H1 (cell line): ENCODE measurements at regions of chr1 and their contacts with region 1.

Region 1: DNA sequence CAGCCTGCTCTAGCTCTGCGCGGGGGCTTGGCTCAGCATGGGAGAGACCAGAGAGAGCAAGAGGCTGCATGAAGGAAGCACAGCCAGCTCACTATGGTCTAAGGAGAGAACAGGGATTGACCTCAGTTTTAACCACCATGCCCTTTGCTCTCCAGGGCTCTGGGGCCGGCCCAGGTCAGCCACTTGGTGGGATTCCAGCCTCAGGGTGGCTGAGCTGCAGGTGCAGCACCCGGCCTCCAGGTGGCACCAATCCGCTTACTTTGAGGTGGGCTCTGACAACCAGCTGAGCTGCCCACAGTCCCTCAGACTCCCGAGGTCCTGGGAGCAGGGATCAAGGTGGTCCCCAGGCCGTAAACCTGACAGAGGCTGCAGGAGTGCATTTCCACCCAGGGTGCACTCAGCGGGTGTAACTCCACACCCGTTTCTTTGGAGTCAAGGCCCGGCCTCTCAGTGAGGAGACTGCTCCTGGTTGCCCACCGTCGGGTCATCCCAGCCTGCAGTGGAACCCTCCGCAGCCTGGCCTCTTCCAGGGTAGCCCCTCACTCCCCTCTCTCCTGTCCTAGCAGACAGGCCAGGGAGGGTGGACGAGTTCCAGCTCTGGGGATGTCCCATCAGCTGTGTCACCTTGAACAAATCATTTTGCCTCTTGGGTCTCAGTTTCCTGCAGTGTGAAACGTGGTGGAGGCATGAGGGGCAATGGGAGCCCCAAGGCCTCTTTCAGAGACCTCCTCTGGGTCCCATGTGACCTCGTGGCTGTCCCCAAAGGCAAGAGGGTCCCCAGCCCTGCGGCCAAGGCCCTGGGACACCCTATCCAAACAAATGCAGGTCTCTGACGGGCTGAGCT is 607 bp upstream of the LGR6 start:
- DNase-seq: peak in 1 of 2 experiments; percentile 92
- H3K4me3 ChIP-seq: peak overlapping the region in 3 of 4 experiments; percentile 34 to 65 (median 40); a peak in 5 of 8 replicates
- H3K27ac ChIP-seq: no peak overlapping the region
- H3K4me1 ChIP-seq: peaks cover 0 to 9% (median 2%) of the 10 kb centered on the region in 4 experiments; a peak in 5 of 7 replicates
- H3K27me3 ChIP-seq: peaks cover 16 to 31% (median 22%) of the 10 kb centered on the region in 4 experiments
- CTCF ChIP-seq: peak; percentile 93 to 97 (median 96)
- EP300 ChIP-seq: no peak
- POLR2A ChIP-seq: no peak
- RAD21 ChIP-seq: peak; percentile 81 to 86

Region 2: GRCh38 chr1:202154766-202155477 is 38.1 kb before region 1 on chr1:
- CTCF ChIA-PET with region 1: interaction called, 22 read pairs
- POLR2A ChIA-PET with region 1: no interaction called
- DNase-seq: peak; percentile 39 to 77
- H3K4me3 ChIP-seq: no peak overlapping the region
- H3K27ac ChIP-seq: no peak overlapping the region
- H3K4me1 ChIP-seq: peaks cover 0 to 9% (median 5%) of the 10 kb centered on the region in 4 experiments; a peak in 3 of 7 replicates
- H3K27me3 ChIP-seq: no peaks in the 10 kb centered on the region
- CTCF ChIP-seq: peak; percentile 67 to 84 (median 69)
- EP300 ChIP-seq: no peak
- POLR2A ChIP-seq: no peak
- RAD21 ChIP-seq: peak; percentile 57 to 65

Region 3: DNA sequence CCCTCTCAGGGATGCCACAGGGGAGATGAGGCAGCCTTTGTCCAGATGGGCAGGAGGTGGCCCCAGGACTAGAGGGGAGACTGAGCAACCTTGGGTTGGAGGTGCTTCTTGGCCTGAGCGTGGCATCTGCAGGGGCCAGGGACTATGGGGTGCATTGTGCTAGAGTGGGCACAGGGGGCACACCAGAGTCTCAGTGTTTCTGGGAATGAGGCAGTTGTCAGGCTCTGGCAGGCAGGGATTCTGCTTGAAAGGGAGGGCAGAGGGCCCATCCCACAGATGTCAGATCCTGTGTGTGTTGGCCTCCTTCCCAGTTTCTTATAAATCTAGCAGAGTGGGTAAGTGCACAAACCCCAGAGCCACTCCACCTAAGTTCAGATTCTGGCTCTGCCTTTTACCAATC is 14.3 kb after region 1 on chr1:
- CTCF ChIA-PET with region 1: interaction called, 48 read pairs
- POLR2A ChIA-PET with region 1: interaction called, 3 read pairs
- DNase-seq: no peak
- H3K4me3 ChIP-seq: no peak overlapping the region
- H3K27ac ChIP-seq: no peak overlapping the region
- H3K4me1 ChIP-seq: peaks cover 0 to 2% (median 0%) of the 10 kb centered on the region in 4 experiments; a peak in 1 of 7 replicates
- H3K27me3 ChIP-seq: peaks cover 0 to 2% (median 0%) of the 10 kb centered on the region in 4 experiments; a peak in 1 of 7 replicates
- CTCF ChIP-seq: peak; percentile 48 to 59 (median 51)
- EP300 ChIP-seq: no peak
- POLR2A ChIP-seq: no peak
- RAD21 ChIP-seq: peak; percentile 32 to 48; a peak in 3 of 4 replicates

Region 4: DNA sequence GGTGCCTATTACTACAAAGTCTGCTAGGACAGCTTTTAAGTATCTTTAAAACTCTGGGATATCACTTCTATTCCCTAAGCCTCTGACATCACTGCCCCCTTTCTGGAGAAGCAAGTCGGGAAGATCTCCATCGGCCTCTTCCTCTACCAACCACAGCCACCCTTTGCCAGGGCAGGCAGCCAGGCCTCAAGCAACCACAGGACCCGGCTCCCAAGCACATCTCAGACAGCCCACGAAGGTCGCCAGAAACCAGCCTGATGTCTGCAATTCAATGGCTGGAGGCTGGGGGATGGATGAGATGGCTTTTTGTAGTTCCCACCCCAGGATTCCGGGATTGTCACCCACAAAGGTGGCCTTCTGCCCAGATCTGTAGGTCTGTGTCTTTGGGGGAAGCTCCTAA is 71.3 kb after region 1 on chr1:
- CTCF ChIA-PET with region 1: interaction called, 12 read pairs
- POLR2A ChIA-PET with region 1: no interaction called
- DNase-seq: no peak
- H3K4me3 ChIP-seq: no peak overlapping the region
- H3K27ac ChIP-seq: no peak overlapping the region
- H3K4me1 ChIP-seq: peaks cover 0 to 4% (median 1%) of the 10 kb centered on the region in 4 experiments; a peak in 1 of 7 replicates
- H3K27me3 ChIP-seq: no peaks in the 10 kb centered on the region
- CTCF ChIP-seq: no peak
- EP300 ChIP-seq: no peak
- POLR2A ChIP-seq: no peak
- RAD21 ChIP-seq: no peak

Region 5: DNA sequence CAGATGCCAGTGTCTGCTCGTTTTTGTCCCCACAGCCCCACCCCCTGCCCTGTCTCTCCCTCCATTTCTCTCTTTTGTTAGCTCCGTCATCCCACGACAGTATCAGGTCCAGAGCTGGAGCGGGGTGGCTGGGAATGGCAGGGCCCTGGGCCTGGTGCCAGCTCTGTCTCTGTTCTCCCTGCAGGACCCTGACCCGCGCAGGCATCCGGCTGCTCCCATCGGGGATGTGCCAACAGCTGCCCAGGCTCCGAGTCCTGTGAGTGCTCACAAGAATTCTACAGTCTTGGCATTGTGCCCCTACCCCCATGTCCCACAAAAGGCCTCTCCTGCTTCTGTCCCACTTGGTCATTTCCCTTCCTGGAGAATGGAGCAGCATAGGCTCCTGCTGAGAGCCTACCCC is 111.4 kb after region 1 on chr1:
- CTCF ChIA-PET with region 1: interaction called, 44 read pairs
- POLR2A ChIA-PET with region 1: no interaction called
- DNase-seq: no peak
- H3K4me3 ChIP-seq: no peak overlapping the region
- H3K27ac ChIP-seq: no peak overlapping the region
- H3K4me1 ChIP-seq: no peaks in the 10 kb centered on the region
- H3K27me3 ChIP-seq: no peaks in the 10 kb centered on the region; a peak in 1 of 7 replicates
- CTCF ChIP-seq: no peak
- EP300 ChIP-seq: no peak
- POLR2A ChIP-seq: no peak
- RAD21 ChIP-seq: no peak

Region 6: DNA sequence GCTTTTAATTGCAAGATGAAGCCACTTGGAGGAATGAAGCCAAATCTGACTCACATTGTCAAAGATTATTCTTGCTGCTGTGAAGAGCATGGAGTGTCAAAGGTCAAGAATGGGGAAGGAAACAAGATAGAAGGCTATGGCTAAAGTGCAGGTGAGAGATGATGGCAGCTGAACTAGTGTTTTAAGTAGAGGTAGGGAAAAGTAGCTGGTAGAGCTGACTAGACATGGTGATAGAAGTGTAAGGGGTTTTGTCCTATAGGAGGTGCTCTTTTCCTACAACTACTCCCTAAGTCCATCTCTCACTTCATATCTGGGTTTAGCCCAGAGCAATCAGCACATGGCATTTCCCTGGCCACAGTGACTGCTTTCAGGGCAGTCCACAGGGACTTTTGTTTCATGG is 136.9 kb after region 1 on chr1:
- CTCF ChIA-PET with region 1: interaction called, 12 read pairs
- POLR2A ChIA-PET with region 1: no interaction called
- DNase-seq: no peak
- H3K4me3 ChIP-seq: no peak overlapping the region
- H3K27ac ChIP-seq: no peak overlapping the region
- H3K4me1 ChIP-seq: no peaks in the 10 kb centered on the region; a peak in 1 of 7 replicates
- H3K27me3 ChIP-seq: no peaks in the 10 kb centered on the region
- CTCF ChIP-seq: peak in 2 of 3 experiments; percentile 35 to 63; a peak in 3 of 4 replicates
- EP300 ChIP-seq: no peak
- POLR2A ChIP-seq: no peak
- RAD21 ChIP-seq: peak; percentile 43 to 62